ENCODE measurements at regions of chr2 and their contacts with region 1.

Region 1: DNA sequence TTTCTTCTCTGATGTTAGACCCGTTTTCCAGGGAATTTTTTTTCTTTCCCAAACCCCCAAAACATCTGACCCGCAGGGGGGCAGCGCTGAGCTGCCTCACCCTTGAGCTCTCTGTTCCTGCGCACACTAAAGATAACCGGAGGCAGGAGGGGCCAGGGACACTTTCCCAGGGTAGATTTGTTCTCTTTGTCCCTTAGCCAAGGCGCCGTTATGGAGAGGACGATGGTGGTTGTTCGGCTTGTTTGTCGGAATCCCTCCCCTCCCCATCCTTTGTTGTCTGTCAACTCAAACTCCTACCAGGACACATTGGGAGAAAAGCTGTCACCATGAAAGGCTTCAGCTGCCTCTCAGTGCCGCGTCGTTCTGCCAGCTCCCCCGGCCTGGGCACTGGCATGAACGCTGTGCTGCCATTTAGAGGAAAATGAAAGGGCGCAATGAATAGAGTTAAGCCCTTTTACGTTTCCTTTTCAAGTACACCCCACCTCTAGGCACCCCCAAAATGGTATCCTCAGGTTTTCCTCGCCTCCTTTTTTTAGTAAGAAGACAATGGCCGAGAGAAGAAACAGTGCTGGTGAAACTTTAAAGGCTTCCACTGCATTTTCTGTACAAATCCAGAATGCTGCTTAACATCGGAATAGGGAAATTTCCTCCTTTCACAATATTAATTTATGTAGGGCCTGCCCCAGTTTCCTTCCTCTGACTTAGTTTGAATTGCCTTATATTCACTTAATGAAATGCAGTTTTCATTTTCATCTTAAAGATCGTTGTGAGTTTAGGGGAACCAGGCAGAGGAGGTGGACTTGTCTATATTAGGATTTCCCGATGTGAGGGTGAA is 62.1 kb downstream of the RND3 start:
- DNase-seq: no peak
- ATAC-seq: peak; percentile 51
- H3K4me3 ChIP-seq: no peak overlapping the region
- H3K27ac ChIP-seq: no peak overlapping the region
- H3K4me1 ChIP-seq: no peaks in the 10 kb centered on the region
- H3K27me3 ChIP-seq: no peaks in the 10 kb centered on the region
- CTCF ChIP-seq: no peak
- EP300 ChIP-seq: no peak
- POLR2A ChIP-seq: no peak
- RAD21 ChIP-seq: no peak

Region 2: DNA sequence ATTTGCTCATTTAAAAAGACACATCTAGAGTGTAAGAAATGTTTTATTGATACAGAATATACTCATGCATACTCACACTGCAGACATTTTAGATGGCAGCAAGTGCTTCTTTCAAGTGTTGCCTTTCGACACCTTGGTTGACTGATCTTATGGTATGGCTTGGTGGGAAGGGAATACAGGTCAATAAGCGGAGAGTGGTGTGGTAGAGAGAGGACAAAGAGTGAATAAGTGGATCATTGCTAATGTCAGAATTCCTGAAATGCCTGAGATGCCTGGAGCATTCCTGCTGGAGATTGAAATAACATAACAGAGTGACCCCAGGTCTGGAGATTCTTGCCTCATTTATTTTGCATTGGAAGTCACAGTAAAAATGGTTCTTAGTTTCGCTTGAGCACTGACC is 14.5 kb before region 1 on chr2:
- CTCF ChIA-PET with region 1: interaction called, 9 read pairs
- POLR2A ChIA-PET with region 1: interaction called, 3 read pairs
- RAD21 ChIA-PET with region 1: interaction called, 4 read pairs
- SMC1A ChIA-PET with region 1: interaction called, 17 read pairs
- in situ Hi-C with region 1: no loop called
- intact Hi-C with region 1: no loop called
- DNase-seq: no peak
- ATAC-seq: no peak
- H3K4me3 ChIP-seq: no peak overlapping the region
- H3K27ac ChIP-seq: no peak overlapping the region
- H3K4me1 ChIP-seq: no peaks in the 10 kb centered on the region
- H3K27me3 ChIP-seq: no peaks in the 10 kb centered on the region
- CTCF ChIP-seq: no peak
- EP300 ChIP-seq: no peak
- POLR2A ChIP-seq: no peak
- RAD21 ChIP-seq: no peak

Region 3: DNA sequence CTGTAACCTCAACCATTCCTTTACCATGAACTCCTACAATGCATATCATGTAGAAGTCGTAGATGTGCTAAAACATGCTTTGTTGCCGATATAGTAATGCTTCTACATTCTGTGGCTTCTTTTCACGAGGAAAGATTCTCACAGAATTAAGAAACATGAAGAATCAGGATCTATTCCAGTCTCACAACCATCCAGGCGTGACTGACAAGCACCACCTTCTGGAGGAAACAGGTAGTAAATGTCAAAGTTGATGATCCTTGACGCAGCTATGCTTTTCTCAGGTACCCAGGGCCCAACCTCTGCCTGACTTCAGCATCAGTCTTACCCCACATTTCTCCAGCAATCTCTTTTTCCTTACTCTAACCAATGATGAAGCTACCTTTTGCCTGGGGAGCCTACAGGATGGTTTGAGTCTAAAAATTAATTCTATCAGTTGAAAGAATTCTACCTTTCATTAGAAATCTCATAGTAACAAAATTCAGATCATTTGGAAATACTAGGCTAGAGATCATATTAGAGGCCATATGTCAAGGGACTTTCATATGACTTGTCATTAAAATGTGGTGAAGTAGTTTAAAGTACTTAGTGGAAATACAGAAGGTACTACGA is 185.4 kb after region 1 on chr2:
- CTCF ChIA-PET with region 1: interaction called, 17 read pairs
- POLR2A ChIA-PET with region 1: no interaction called
- RAD21 ChIA-PET with region 1: interaction called, 7 read pairs
- SMC1A ChIA-PET with region 1: interaction called, 10 read pairs
- in situ Hi-C with region 1: no loop called
- intact Hi-C with region 1: no loop called
- DNase-seq: no peak
- ATAC-seq: peak; percentile 85
- H3K4me3 ChIP-seq: no peak overlapping the region
- H3K27ac ChIP-seq: no peak overlapping the region
- H3K4me1 ChIP-seq: no peaks in the 10 kb centered on the region
- H3K27me3 ChIP-seq: no peaks in the 10 kb centered on the region; a peak in 1 of 4 replicates
- CTCF ChIP-seq: peak; percentile 30 to 52 (median 46); a peak in 4 of 6 replicates
- EP300 ChIP-seq: no peak
- POLR2A ChIP-seq: no peak
- RAD21 ChIP-seq: peak; percentile 55

Measured in GM12878 (cell line).